Thyroid gland (tissue), 4 donors: ENCODE measurements at regions of chr5 and their contacts with region 1.

Region 1: GRCh38 chr5:95961617-95962474 is at the start of gene ELL2:
- DNase-seq: peak; percentile 100
- H3K4me3 ChIP-seq: peak within 1 kb of the TSS; percentile 57 to 92 (median 90)
- H3K27ac ChIP-seq: peak within 1 kb of the TSS; percentile 99 to 100 (median 99)
- H3K4me1 ChIP-seq: peaks cover 27 to 29% of the 10 kb centered on the region in 2 donors
- H3K27me3 ChIP-seq: no peaks in the 10 kb centered on the region
- CTCF ChIP-seq: no peak
- POLR2A ChIP-seq: peak; percentile 45 to 92
- total RNA-seq, gene ELL2: 56.1 to 80.2 (median 69.6) TPM

Region 2: DNA sequence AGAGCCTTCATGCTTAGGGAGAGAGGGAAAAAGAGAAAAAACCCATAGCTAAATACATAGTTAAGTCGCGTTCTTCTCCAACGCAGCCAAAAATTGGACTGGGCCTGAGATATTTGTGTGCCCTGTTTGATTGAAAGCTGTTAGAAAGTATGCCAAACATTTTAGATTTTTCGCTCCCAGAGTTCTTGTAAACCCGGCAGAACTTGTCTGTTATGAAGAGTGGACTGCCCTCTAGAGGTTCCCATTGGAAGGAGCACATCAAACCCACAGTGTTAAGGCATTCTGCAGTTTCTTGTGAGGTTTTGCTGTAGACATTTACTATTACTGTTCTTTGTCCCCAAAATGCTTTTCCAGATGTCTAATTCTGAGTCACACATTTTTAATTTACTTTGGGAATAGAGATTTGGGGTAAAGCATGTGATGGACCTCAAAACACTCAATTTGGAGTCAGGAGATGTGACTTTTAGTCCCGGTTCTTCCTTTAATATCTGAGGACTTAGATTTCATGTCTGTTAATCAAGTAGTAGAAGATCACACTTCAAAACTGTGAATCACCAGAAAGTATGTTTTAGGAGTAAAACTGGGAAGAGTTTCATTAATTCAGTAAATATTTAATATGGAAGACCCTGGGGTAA is 374.6 kb after region 1 on chr5:
- intact Hi-C with region 1: loop called (anchors 10 kb)
- DNase-seq: peak; percentile 75 to 76
- H3K4me3 ChIP-seq: no peak overlapping the region
- H3K27ac ChIP-seq: peak overlapping the region in 2 of 3 donors; percentile 6 to 7
- H3K4me1 ChIP-seq: peaks cover 5 to 24% of the 10 kb centered on the region in 2 donors
- H3K27me3 ChIP-seq: no peaks in the 10 kb centered on the region
- CTCF ChIP-seq: peak; percentile 48 to 91 (median 85)
- POLR2A ChIP-seq: no peak